ENCODE measurements at regions of chr2 and their contacts with region 1.

Region 1: GRCh38 chr2:149561309-149561926 is 26.2 kb downstream of the MMADHC start:
- DNase-seq: peak; percentile 42
- H3K4me3 ChIP-seq: no peak overlapping the region
- H3K27ac ChIP-seq: no peak overlapping the region
- H3K4me1 ChIP-seq: peaks cover 13% of the 10 kb centered on the region
- H3K27me3 ChIP-seq: no peaks in the 10 kb centered on the region

Region 2: GRCh38 chr2:148644883-148645538 is 916.4 kb before region 1 on chr2:
- in situ Hi-C with region 1: loop called (anchors 25 kb)
- DNase-seq: peak; percentile 97
- H3K4me3 ChIP-seq: peak overlapping the region; percentile 90
- H3K27ac ChIP-seq: peak overlapping the region; percentile 90
- H3K4me1 ChIP-seq: 0 out of 2 replicates have a peak, but pooled peaks cover 5% of the 10 kb centered on the region
- H3K27me3 ChIP-seq: no peaks in the 10 kb centered on the region

Region 3: GRCh38 chr2:149017116-149017985 is 544.1 kb before region 1 on chr2:
- in situ Hi-C with region 1: loop called (anchors 5 kb)
- DNase-seq: peak; percentile 82
- H3K4me3 ChIP-seq: no peak overlapping the region
- H3K27ac ChIP-seq: no peak overlapping the region
- H3K4me1 ChIP-seq: no peaks in the 10 kb centered on the region
- H3K27me3 ChIP-seq: no peaks in the 10 kb centered on the region

Region 4: GRCh38 chr2:149330126-149331022 is 231.0 kb before region 1 on chr2 and contains the start of gene LYPD6:
- in situ Hi-C with region 1: loop called (anchors 25 kb)
- DNase-seq: peak; percentile 90
- H3K4me3 ChIP-seq: peak within 1 kb of the TSS; percentile 77
- H3K27ac ChIP-seq: no peak within 1 kb of the TSS
- H3K4me1 ChIP-seq: no peaks in the 10 kb centered on the region
- H3K27me3 ChIP-seq: peaks cover 9% of the 10 kb centered on the region; the same call in 1 of the 2 replicates
- total RNA-seq, gene LYPD6: 3.9 TPM in 2 replicates